HepG2 (cell line): ENCODE measurements at regions of chr12 and their contacts with region 1.

Region 1: GRCh38 chr12:22900401-22900800 is 275.4 kb downstream of the ETNK1 start:
- DNase-seq: no peak
- ATAC-seq: no peak
- H3K4me3 ChIP-seq: no peak overlapping the region
- H3K27ac ChIP-seq: no peak overlapping the region
- H3K4me1 ChIP-seq: no peaks in the 10 kb centered on the region
- H3K27me3 ChIP-seq: no peaks in the 10 kb centered on the region
- CTCF ChIP-seq: no peak
- EP300 ChIP-seq: no peak
- POLR2A ChIP-seq: no peak
- RAD21 ChIP-seq: no peak

Region 2: DNA sequence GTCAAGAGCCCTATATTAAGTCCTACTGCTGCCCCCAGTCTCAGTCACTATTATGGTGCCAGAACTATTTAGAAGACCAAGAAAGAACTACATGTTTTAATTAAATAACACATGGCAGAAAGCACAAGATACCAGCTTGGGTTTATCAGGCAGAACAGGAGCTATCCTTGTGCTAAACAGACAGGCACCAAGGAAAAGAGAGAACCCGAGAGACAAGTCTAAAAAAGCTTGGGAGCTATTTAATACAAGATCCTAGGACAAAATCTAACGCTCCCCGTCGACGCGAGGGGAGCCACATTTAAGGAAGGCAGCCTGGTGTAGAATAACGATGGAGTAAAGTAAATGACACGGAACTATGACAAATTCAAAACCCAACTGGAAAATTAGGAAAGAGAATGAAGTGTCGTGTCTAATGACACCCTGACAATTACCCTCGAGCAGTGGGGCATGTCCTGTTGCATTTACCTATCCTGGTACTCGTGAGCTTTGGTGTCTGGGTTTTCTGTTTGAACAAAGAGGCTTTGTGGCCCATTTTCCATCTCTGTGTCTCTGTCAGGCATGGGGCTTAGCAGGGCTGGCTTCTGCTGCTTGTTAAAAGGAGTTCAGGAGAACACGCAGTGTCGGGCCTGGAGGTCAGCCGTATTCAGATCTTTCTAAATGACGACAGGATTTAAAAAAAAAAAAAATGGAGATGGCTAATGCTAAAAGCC is 134.8 kb before region 1 on chr12:
- CTCF ChIA-PET with region 1: no interaction called
- POLR2A ChIA-PET with region 1: no interaction called
- in situ Hi-C with region 1: no loop called
- intact Hi-C with region 1: no loop called
- DNase-seq: no peak
- ATAC-seq: no peak
- H3K4me3 ChIP-seq: no peak overlapping the region
- H3K27ac ChIP-seq: no peak overlapping the region
- H3K4me1 ChIP-seq: no peaks in the 10 kb centered on the region
- H3K27me3 ChIP-seq: peaks cover 0 to 4% of the 10 kb centered on the region in 2 experiments; a peak in 1 of 5 replicates
- CTCF ChIP-seq: no peak
- EP300 ChIP-seq: no peak
- POLR2A ChIP-seq: no peak
- RAD21 ChIP-seq: no peak

Region 3: GRCh38 chr12:22781339-22781738 is 119.1 kb before region 1 on chr12:
- CTCF ChIA-PET with region 1: no interaction called
- POLR2A ChIA-PET with region 1: no interaction called
- in situ Hi-C with region 1: no loop called
- intact Hi-C with region 1: no loop called
- DNase-seq: no peak
- ATAC-seq: no peak
- H3K4me3 ChIP-seq: no peak overlapping the region
- H3K27ac ChIP-seq: no peak overlapping the region
- H3K4me1 ChIP-seq: no peaks in the 10 kb centered on the region
- H3K27me3 ChIP-seq: no peaks in the 10 kb centered on the region
- CTCF ChIP-seq: no peak
- EP300 ChIP-seq: no peak
- POLR2A ChIP-seq: no peak
- RAD21 ChIP-seq: no peak

Region 4: GRCh38 chr12:22828073-22828472 is 72.3 kb before region 1 on chr12:
- CTCF ChIA-PET with region 1: no interaction called
- POLR2A ChIA-PET with region 1: no interaction called
- in situ Hi-C with region 1: no loop called
- intact Hi-C with region 1: loop called (anchors 5 kb)
- DNase-seq: peak; percentile 3
- ATAC-seq: no peak
- H3K4me3 ChIP-seq: no peak overlapping the region
- H3K27ac ChIP-seq: no peak overlapping the region
- H3K4me1 ChIP-seq: no peaks in the 10 kb centered on the region
- H3K27me3 ChIP-seq: no peaks in the 10 kb centered on the region
- CTCF ChIP-seq: no peak
- EP300 ChIP-seq: no peak
- POLR2A ChIP-seq: no peak
- RAD21 ChIP-seq: no peak

Region 5: DNA sequence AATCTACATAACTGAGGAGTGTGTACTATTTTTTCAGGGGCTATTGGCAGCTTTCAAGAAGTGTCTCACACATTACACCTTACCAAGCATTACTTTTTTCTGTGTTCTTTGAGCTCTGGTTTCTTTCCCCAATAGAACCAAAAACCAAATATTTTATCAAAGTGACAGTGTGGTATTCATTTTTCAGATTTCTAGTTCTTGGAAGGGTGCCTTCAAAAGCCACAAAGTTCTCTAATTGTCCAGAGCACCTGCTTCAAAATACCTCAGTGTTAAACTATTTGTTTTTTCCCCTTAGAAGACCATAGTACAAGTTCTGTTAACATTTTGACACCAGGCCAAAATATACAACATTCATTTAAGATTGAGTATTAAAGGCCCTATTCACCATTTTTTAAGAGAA is 240.3 kb after region 1 on chr12:
- CTCF ChIA-PET with region 1: no interaction called
- POLR2A ChIA-PET with region 1: no interaction called
- in situ Hi-C with region 1: no loop called
- intact Hi-C with region 1: no loop called
- DNase-seq: no peak
- ATAC-seq: no peak
- H3K4me3 ChIP-seq: no peak overlapping the region
- H3K27ac ChIP-seq: no peak overlapping the region
- H3K4me1 ChIP-seq: no peaks in the 10 kb centered on the region
- H3K27me3 ChIP-seq: no peaks in the 10 kb centered on the region
- CTCF ChIP-seq: no peak
- EP300 ChIP-seq: no peak
- POLR2A ChIP-seq: no peak
- RAD21 ChIP-seq: no peak